ENCODE measurements at regions of chr12 and their contacts with region 1.

Region 1: GRCh38 chr12:112198120-112198733 is 72.9 kb downstream of the TRAFD1 start:
- DNase-seq: peak; percentile 64 to 82 (median 77)
- H3K4me3 ChIP-seq: no peak overlapping the region
- H3K27ac ChIP-seq: no peak overlapping the region
- H3K4me1 ChIP-seq: no peaks in the 10 kb centered on the region
- H3K27me3 ChIP-seq: no peaks in the 10 kb centered on the region

Region 2: GRCh38 chr12:111624540-111624939 is 573.7 kb before region 1 on chr12:
- CTCF ChIA-PET with region 1: no interaction called
- POLR2A ChIA-PET with region 1: no interaction called
- DNase-seq: no peak
- H3K4me3 ChIP-seq: no peak overlapping the region
- H3K27ac ChIP-seq: no peak overlapping the region
- H3K4me1 ChIP-seq: no peaks in the 10 kb centered on the region
- H3K27me3 ChIP-seq: no peaks in the 10 kb centered on the region

Region 3: DNA sequence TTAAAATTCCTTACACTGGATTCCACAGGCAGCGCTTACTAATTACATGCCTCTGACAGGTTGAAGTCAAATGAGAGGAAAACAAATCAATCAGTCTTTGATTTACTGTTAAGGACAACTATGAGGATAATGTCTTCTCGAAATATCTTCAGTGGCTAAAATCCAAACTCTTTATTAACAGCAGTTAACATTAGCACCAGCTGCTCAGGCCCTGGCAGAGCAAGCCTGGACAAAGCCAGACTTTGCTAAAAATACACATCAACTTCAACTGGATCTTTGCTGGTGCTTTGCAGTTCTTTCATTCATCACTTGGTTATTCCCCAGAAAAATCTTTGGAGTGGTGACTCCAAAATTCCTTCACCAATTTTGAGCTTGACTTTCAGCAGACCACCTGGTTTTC is 85.3 kb after region 1 on chr12:
- CTCF ChIA-PET with region 1: no interaction called
- POLR2A ChIA-PET with region 1: no interaction called
- DNase-seq: no peak
- H3K4me3 ChIP-seq: no peak overlapping the region
- H3K27ac ChIP-seq: no peak overlapping the region
- H3K4me1 ChIP-seq: peaks cover 0 to 7% (median 3%) of the 10 kb centered on the region in 4 experiments
- H3K27me3 ChIP-seq: no peaks in the 10 kb centered on the region

Region 4: GRCh38 chr12:112386726-112387125 is 188.5 kb after region 1 on chr12:
- CTCF ChIA-PET with region 1: interaction called, 67 read pairs
- POLR2A ChIA-PET with region 1: no interaction called
- DNase-seq: peak in 1 of 3 donors; percentile 14
- H3K4me3 ChIP-seq: no peak overlapping the region
- H3K27ac ChIP-seq: no peak overlapping the region
- H3K4me1 ChIP-seq: peaks cover 1 to 7% (median 5%) of the 10 kb centered on the region in 4 experiments
- H3K27me3 ChIP-seq: peaks cover 0 to 3% (median 0%) of the 10 kb centered on the region in 5 experiments

Region 5: DNA sequence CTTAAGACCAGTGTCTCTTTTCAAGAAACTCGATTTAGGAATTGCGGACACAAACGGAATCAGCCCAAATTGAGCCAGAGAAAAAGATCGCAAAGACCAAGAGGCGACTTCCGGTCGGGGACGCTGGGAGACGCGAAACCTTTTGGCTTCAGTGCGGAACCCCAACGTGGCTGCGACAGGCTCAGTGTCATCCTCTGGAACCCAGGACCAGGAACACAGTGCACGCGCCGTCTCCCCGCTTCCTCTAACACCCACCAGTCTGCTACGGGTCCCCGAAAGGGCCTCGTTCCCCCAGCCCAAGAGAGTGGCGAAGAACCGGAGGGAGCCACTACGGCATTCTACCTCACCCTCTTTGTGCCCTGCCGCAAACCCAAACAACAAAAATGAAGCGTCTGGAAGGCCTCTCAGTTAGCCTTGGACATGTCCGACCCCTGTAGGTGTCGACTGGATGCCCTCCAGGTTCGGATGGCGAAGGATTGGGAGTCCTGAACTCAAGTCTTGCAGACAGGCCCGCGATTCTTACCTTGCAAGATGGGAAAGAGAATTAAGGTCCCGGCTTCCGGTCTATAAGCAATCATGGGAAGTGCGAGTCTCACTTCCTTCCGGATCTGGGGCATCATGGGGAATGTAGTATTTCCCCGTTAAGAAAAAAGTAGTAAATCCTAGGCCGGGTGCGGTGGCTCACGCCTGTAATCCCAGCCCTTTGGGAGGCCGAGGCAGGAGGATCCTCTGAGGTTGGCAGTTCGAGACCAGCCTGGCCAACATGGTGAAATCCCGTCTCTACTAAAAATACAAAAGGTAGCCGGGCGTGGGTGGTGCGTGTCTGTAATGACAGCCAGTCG is 211.1 kb after region 1 on chr12 and contains the start of gene RPL6:
- CTCF ChIA-PET with region 1: interaction called, 14 read pairs
- POLR2A ChIA-PET with region 1: no interaction called
- DNase-seq: peak; percentile 92 to 96 (median 95)
- H3K4me3 ChIP-seq: peak within 1 kb of the TSS; percentile 86 to 99 (median 93)
- H3K27ac ChIP-seq: peak within 1 kb of the TSS; percentile 91 to 96
- H3K4me1 ChIP-seq: peaks cover 10 to 26% (median 16%) of the 10 kb centered on the region in 4 experiments
- H3K27me3 ChIP-seq: no peaks in the 10 kb centered on the region

Measured in common myeloid progenitor, CD34-positive (primary cell).